ENCODE measurements at regions of chr14 and their contacts with region 1.

Region 1: GRCh38 chr14:56694609-56695008 is 115.0 kb downstream of the TMEM260 start:
- DNase-seq: no peak
- ATAC-seq: no peak
- H3K4me3 ChIP-seq: no peak overlapping the region
- H3K27ac ChIP-seq: no peak overlapping the region
- H3K4me1 ChIP-seq: no peaks in the 10 kb centered on the region
- H3K27me3 ChIP-seq: peaks cover 0 to 24% (median 5%) of the 10 kb centered on the region in 7 donors
- CTCF ChIP-seq: no peak

Region 2: GRCh38 chr14:57182760-57183503 is 488.3 kb after region 1 on chr14:
- intact Hi-C with region 1: loop called in 1 of 10 experiments (anchors 10 kb)
- DNase-seq: no peak
- ATAC-seq: no peak
- H3K4me3 ChIP-seq: no peak overlapping the region
- H3K27ac ChIP-seq: no peak overlapping the region
- H3K4me1 ChIP-seq: no peaks in the 10 kb centered on the region
- H3K27me3 ChIP-seq: peaks cover 0 to 29% (median 9%) of the 10 kb centered on the region in 7 donors
- CTCF ChIP-seq: peak in 1 of 9 donors; percentile 15